ENCODE measurements at regions of chr3 and their contacts with region 1.

Region 1: DNA sequence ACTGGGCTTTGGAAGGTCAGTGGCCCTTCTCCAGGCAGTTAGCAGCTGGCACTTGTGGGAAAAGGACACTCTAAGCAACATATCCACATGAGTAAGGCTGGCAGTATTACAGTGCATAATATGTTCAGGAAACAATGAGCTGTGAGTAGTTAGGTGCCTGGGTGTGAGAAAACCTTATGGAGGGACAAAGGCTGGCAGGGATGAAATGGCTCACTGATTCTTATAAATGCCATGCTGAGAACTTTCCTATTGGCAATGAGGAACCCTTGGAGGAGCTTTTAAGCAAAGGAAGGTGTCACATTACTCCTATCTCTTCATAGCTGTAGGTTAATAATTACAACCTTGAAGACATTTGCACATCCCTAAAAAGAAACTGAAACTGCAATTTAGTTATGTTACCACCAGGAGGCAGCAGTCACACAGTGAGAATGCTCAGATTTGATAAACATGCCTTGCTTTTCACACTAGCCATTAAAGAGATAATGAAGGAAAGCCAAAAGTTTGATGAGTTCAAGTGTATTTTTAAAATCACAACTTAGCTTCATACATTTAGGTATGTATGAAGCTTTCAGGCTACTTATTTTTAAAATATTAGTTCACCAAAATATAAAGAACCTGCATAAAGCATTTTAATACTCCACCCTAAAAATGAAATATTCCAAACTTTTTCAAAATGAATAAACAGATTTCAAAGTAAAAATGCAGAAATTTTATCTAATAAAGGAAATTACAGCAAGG is 136.6 kb upstream of the SLC2A2 start:
- DNase-seq: no peak
- H3K4me3 Mint-ChIP-seq: no peak overlapping the region
- H3K27ac Mint-ChIP-seq: no peak overlapping the region
- H3K4me1 Mint-ChIP-seq: peaks cover 20% of the 10 kb centered on the region
- H3K27me3 Mint-ChIP-seq: no peaks in the 10 kb centered on the region

Region 2: GRCh38 chr3:171561596-171562323 is 398.6 kb after region 1 on chr3:
- intact Hi-C with region 1: loop called (anchors 1 kb)
- DNase-seq: no peak
- H3K4me3 Mint-ChIP-seq: peak overlapping the region; percentile 50
- H3K27ac Mint-ChIP-seq: peak overlapping the region; percentile 92
- H3K4me1 Mint-ChIP-seq: peaks cover 66% of the 10 kb centered on the region
- H3K27me3 Mint-ChIP-seq: no peaks in the 10 kb centered on the region

Region 3: GRCh38 chr3:171833789-171834460 is 670.8 kb after region 1 on chr3:
- intact Hi-C with region 1: no loop called
- DNase-seq: no peak
- H3K4me3 Mint-ChIP-seq: no peak overlapping the region
- H3K27ac Mint-ChIP-seq: no peak overlapping the region
- H3K4me1 Mint-ChIP-seq: no peaks in the 10 kb centered on the region
- H3K27me3 Mint-ChIP-seq: peaks cover 27% of the 10 kb centered on the region